Calu3 (cell line): ENCODE measurements at regions of chr3 and their contacts with region 1.

Region 1: GRCh38 chr3:129490242-129491045 is 38.0 kb upstream of the RHO start:
- DNase-seq: peak; percentile 91
- H3K4me3 Mint-ChIP-seq: no peak overlapping the region
- H3K27ac Mint-ChIP-seq: peak overlapping the region; percentile 37
- H3K4me1 Mint-ChIP-seq: peaks cover 14% of the 10 kb centered on the region
- H3K27me3 Mint-ChIP-seq: no peaks in the 10 kb centered on the region
- CTCF ChIP-seq: peak; percentile 93

Region 2: DNA sequence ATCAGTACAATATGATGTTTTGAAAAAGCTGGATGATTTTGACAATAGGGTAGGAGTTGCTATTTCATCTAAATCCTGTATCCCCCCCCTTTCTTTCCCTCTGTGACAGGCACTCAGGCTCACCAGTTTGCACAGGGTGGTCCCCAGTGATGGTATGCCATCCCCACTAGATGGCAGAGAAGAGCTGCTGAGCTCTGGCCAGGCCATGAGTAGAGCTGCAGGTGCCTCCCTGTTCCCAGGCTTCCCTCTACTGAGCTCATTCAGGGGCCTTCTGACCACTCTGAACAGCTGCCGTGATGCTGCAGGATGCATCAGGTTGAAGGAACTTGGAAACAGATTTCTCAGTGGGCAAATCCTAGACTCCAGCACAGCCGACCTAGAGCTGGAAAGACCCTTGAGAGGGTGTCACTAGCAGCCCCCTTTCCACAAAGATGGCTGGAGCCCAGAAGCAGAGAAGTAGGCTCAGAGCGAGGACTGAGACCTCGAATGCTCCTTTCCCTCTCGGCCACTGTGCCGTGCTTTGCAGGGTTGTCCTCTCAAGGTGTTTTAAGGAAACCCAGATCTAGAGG is 107.1 kb before region 1 on chr3:
- CTCF ChIA-PET with region 1: interaction called, 24 read pairs
- intact Hi-C with region 1: no loop called
- DNase-seq: peak; percentile 83
- H3K4me3 Mint-ChIP-seq: no peak overlapping the region
- H3K27ac Mint-ChIP-seq: no peak overlapping the region
- H3K4me1 Mint-ChIP-seq: no peaks in the 10 kb centered on the region
- H3K27me3 Mint-ChIP-seq: no peaks in the 10 kb centered on the region
- CTCF ChIP-seq: peak; percentile 96

Region 3: GRCh38 chr3:129461461-129462146 is 28.8 kb before region 1 on chr3:
- CTCF ChIA-PET with region 1: no interaction called
- intact Hi-C with region 1: no loop called
- DNase-seq: no peak
- H3K4me3 Mint-ChIP-seq: no peak overlapping the region
- H3K27ac Mint-ChIP-seq: no peak overlapping the region
- H3K4me1 Mint-ChIP-seq: no peaks in the 10 kb centered on the region
- H3K27me3 Mint-ChIP-seq: no peaks in the 10 kb centered on the region
- CTCF ChIP-seq: no peak

Region 4: DNA sequence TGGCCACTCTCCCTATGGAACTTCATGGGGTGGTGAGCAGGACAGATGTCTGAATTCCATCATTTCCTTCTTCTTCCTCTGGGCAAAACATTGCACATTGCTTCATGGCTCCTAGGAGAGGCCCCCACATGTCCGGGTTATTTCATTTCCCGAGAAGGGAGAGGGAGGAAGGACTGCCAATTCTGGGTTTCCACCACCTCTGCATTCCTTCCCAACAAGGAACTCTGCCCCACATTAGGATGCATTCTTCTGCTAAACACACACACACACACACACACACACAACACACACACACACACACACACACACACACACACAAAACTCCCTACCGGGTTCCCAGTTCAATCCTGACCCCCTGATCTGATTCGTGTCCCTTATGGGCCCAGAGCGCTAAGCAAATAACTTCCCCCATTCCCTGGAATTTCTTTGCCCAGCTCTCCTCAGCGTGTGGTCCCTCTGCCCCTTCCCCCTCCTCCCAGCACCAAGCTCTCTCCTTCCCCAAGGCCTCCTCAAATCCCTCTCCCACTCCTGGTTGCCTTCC is 39.9 kb after region 1 on chr3:
- CTCF ChIA-PET with region 1: no interaction called
- intact Hi-C with region 1: no loop called
- DNase-seq: no peak
- H3K4me3 Mint-ChIP-seq: no peak overlapping the region
- H3K27ac Mint-ChIP-seq: no peak overlapping the region
- H3K4me1 Mint-ChIP-seq: peaks cover 8% of the 10 kb centered on the region
- H3K27me3 Mint-ChIP-seq: peaks cover 58% of the 10 kb centered on the region
- CTCF ChIP-seq: no peak

Region 5: DNA sequence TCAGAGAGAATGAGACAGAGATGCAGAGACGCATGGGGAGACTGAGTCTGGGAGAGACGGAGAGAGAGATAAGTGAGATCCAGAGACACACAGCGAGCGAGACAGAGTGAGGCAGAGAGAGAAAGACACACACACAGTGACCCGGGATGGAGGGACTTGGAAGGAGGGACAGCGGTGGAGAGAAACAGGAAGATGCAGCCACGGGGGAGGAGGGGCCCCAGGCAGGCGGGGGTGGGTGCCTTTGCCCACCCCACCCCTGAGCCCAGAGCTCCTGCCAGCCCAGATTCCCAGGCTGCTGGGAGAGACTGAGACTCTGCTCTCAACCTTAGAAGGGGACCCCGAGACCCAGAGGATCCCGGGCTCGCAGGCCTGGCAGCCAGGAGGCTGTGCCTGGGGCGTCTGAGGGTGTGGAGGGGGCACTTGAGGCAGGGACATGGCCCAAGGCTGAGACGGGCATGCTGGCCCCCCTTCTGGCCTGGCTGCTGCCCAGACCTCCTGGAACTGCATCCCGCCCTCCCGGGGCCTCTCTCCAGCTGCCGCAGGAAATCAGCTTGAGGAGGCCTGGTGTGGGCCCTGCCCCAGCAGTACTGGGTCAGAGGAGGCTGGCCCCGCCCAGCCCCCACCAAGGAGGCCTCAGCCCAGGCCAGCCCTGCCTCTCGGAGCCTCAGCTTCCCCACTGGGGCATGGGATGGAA is 70.6 kb after region 1 on chr3:
- CTCF ChIA-PET with region 1: no interaction called
- intact Hi-C with region 1: no loop called
- DNase-seq: no peak
- H3K4me3 Mint-ChIP-seq: no peak overlapping the region
- H3K27ac Mint-ChIP-seq: no peak overlapping the region
- H3K4me1 Mint-ChIP-seq: no peaks in the 10 kb centered on the region
- H3K27me3 Mint-ChIP-seq: no peaks in the 10 kb centered on the region
- CTCF ChIP-seq: no peak

Region 6: DNA sequence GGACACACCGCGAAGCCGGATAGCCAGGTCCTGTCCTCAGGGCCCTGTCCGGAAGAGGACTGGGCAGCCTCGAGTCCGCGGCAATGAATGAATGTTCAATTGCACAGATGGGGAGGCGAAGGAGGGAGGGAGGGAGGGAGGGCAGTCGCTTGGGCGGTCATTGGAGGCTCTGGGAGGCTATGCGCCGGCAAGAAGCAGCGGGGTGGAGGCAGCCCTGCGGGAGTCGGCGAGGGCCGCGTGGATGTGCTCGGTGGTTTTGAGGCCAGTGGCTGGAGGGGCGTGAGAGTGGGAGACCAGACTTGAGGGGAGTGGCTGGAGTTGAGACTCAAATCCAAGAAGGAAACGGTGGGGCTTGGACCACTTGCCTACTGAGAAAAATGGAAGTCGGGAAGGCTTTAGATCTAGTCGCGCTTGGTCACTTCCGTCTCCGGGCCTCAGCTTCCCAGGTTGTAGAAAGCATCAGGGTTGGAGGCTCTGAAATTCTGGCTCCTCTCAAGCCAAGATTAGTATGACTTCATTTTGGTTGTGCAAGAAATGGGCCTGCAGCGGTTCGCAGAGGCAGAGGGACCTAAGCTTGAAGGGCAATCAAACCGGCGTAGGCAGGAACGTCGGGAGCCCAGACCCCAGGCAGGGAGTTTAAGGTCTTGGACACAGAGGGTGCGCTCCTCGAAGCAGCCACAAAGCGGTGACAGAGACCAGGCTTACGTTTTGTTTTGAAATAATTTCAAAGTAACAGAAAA is 137.2 kb after region 1 on chr3:
- CTCF ChIA-PET with region 1: interaction called, 64 read pairs
- intact Hi-C with region 1: loop called (anchors 1 kb)
- DNase-seq: peak; percentile 86
- H3K4me3 Mint-ChIP-seq: peak overlapping the region; percentile 71
- H3K27ac Mint-ChIP-seq: peak overlapping the region; percentile 57
- H3K4me1 Mint-ChIP-seq: peaks cover 24% of the 10 kb centered on the region
- H3K27me3 Mint-ChIP-seq: no peaks in the 10 kb centered on the region
- CTCF ChIP-seq: peak; percentile 92

Region 7: GRCh38 chr3:129824926-129825541 is 334.6 kb after region 1 on chr3:
- CTCF ChIA-PET with region 1: interaction called, 38 read pairs
- intact Hi-C with region 1: loop called (anchors 1 kb)
- DNase-seq: peak; percentile 88
- H3K4me3 Mint-ChIP-seq: no peak overlapping the region
- H3K27ac Mint-ChIP-seq: peak overlapping the region; percentile 5
- H3K4me1 Mint-ChIP-seq: peaks cover 39% of the 10 kb centered on the region
- H3K27me3 Mint-ChIP-seq: no peaks in the 10 kb centered on the region
- CTCF ChIP-seq: peak; percentile 90

Region 8: DNA sequence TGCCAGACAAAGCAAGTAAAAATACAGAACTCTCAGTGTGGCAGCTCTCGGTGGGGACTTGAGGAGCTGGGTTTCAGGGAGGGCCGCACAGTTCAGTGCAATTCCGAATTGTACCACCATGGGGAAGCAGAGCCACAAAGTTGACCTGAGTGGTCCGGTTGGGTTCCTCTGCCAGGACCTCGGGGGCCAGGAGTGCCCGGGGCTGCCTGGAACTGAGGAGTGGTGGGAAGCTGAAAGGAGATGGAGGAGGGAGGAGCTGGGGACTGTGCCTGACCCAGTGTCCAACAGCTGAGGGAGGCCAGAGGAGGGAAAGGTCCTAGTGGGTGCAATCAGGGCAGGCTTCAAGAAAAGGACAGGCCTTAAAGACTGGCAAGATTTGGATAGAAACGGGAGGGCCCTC is 451.9 kb after region 1 on chr3:
- CTCF ChIA-PET with region 1: interaction called, 10 read pairs
- intact Hi-C with region 1: no loop called
- DNase-seq: peak; percentile 90
- H3K4me3 Mint-ChIP-seq: no peak overlapping the region
- H3K27ac Mint-ChIP-seq: no peak overlapping the region
- H3K4me1 Mint-ChIP-seq: peaks cover 8% of the 10 kb centered on the region
- H3K27me3 Mint-ChIP-seq: peaks cover 36% of the 10 kb centered on the region
- CTCF ChIP-seq: peak; percentile 93